ENCODE measurements at regions of chr20 and their contacts with region 1.

Region 1: DNA sequence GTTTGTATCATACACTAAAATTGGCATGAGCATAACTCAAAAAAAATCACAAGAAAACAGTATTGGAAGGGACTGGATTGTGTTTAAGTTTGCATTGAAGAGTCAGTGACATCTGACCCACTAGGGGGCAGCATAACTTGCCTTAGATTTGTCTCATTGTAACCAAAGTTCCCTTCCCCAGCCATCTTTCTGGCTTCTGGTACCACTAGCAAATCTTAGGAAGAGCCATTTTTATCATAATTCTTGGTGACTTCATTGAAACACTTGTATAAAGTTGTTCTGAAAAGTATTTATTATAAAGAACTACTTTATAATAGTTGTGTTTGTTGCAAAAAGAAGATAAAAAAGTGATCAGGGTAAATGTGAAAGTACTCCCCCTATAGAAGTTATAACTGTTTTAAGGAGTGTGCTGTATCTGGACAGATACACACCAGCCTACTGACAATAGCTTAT is 7.7 kb downstream of the CSTF1 start:
- DNase-seq: peak in 12 of 14 experiments; percentile 19 to 89 (median 58)
- ATAC-seq: peak; percentile 32
- H3K4me3 ChIP-seq: no peak overlapping the region
- H3K4me3 Mint-ChIP-seq: no peak overlapping the region
- H3K27ac ChIP-seq: no peak overlapping the region
- H3K27ac Mint-ChIP-seq: peak overlapping the region; percentile 74
- H3K4me1 ChIP-seq: no peaks in the 10 kb centered on the region
- H3K4me1 Mint-ChIP-seq: peaks cover 34% of the 10 kb centered on the region
- H3K27me3 ChIP-seq: no peaks in the 10 kb centered on the region
- H3K27me3 Mint-ChIP-seq: no peaks in the 10 kb centered on the region
- CTCF ChIP-seq: peak; percentile 92

Region 2: GRCh38 chr20:55974491-55975202 is 425.5 kb before region 1 on chr20:
- CTCF ChIA-PET with region 1: no interaction called
- POLR2A ChIA-PET with region 1: no interaction called
- intact Hi-C with region 1: no loop called
- DNase-seq: no peak
- ATAC-seq: no peak
- H3K4me3 ChIP-seq: no peak overlapping the region
- H3K4me3 Mint-ChIP-seq: no peak overlapping the region
- H3K27ac ChIP-seq: no peak overlapping the region
- H3K27ac Mint-ChIP-seq: no peak overlapping the region
- H3K4me1 ChIP-seq: no peaks in the 10 kb centered on the region
- H3K4me1 Mint-ChIP-seq: no peaks in the 10 kb centered on the region
- H3K27me3 ChIP-seq: no peaks in the 10 kb centered on the region
- H3K27me3 Mint-ChIP-seq: no peaks in the 10 kb centered on the region
- CTCF ChIP-seq: no peak

Region 3: DNA sequence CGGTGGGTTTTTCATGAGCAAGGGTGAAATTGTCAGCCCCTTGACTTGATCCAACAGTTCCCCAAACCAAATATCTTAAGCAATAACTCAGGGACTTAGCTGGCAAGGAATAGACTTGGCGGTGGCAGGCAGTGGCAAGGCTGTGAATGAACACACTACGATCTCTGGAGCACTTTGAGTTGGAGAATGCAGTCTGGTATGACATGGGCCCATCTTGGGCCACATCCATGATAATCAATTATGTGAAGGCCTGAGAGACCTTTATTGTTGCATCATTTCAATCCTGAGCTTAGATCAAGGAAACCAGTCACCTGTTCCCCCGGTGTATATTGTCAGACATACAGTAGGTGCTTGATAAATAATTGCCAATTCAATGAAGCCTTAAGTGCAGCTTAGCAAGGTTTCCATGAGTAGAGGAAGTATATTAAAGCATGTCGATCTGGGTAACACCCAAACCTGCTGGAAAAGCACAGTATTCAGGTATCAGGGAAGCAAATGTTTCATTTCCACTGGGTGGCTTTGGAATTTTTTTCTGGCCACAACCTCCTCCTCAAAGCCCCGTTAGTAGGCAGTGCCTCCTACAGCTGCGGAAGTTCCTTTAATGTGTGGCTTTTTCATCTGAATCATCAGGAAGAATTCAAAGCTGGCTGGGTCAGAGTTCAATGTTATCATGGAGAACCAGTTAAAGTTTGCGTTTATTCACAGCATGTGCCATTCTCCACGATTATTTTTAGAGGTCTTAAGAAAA is 22.1 kb after region 1 on chr20:
- CTCF ChIA-PET with region 1: interaction called, 4 read pairs
- POLR2A ChIA-PET with region 1: no interaction called
- intact Hi-C with region 1: loop called in 1 of 2 experiments (anchors 1 kb)
- DNase-seq: peak in 4 of 14 experiments; percentile 27 to 54 (median 45)
- ATAC-seq: no peak
- H3K4me3 ChIP-seq: no peak overlapping the region
- H3K4me3 Mint-ChIP-seq: peak overlapping the region; percentile 68
- H3K27ac ChIP-seq: peak overlapping the region in 1 of 2 donors; percentile 4
- H3K27ac Mint-ChIP-seq: peak overlapping the region; percentile 91
- H3K4me1 ChIP-seq: peaks cover 62% of the 10 kb centered on the region
- H3K4me1 Mint-ChIP-seq: peaks cover 64% of the 10 kb centered on the region
- H3K27me3 ChIP-seq: no peaks in the 10 kb centered on the region
- H3K27me3 Mint-ChIP-seq: no peaks in the 10 kb centered on the region
- CTCF ChIP-seq: no peak

Region 4: GRCh38 chr20:56468316-56469082 is 68.4 kb after region 1 on chr20 and contains the start of gene RTF2:
- CTCF ChIA-PET with region 1: interaction called, 3 read pairs
- POLR2A ChIA-PET with region 1: no interaction called
- intact Hi-C with region 1: loop called (anchors 2 kb)
- DNase-seq: peak; percentile 91 to 98 (median 94)
- ATAC-seq: peak; percentile 97
- H3K4me3 ChIP-seq: peak within 1 kb of the TSS; percentile 91
- H3K4me3 Mint-ChIP-seq: peak within 1 kb of the TSS; percentile 99
- H3K27ac ChIP-seq: peak within 1 kb of the TSS; percentile 90 to 93
- H3K27ac Mint-ChIP-seq: peak within 1 kb of the TSS; percentile 98
- H3K4me1 ChIP-seq: peaks cover 38% of the 10 kb centered on the region
- H3K4me1 Mint-ChIP-seq: peaks cover 43% of the 10 kb centered on the region
- H3K27me3 ChIP-seq: no peaks in the 10 kb centered on the region
- H3K27me3 Mint-ChIP-seq: no peaks in the 10 kb centered on the region
- CTCF ChIP-seq: no peak
- total RNA-seq, gene RTF2: 52.7 to 55.2 TPM

Region 5: GRCh38 chr20:56504373-56505005 is 104.4 kb after region 1 on chr20:
- CTCF ChIA-PET with region 1: no interaction called
- POLR2A ChIA-PET with region 1: interaction called, 3 read pairs
- intact Hi-C with region 1: loop called in 1 of 2 experiments (anchors 1 kb)
- DNase-seq: peak in 7 of 14 experiments; percentile 5 to 51 (median 9)
- ATAC-seq: peak; percentile 89
- H3K4me3 ChIP-seq: no peak overlapping the region
- H3K4me3 Mint-ChIP-seq: peak overlapping the region; percentile 8
- H3K27ac ChIP-seq: no peak overlapping the region
- H3K27ac Mint-ChIP-seq: peak overlapping the region; percentile 72
- H3K4me1 ChIP-seq: peaks cover 8% of the 10 kb centered on the region
- H3K4me1 Mint-ChIP-seq: peaks cover 32% of the 10 kb centered on the region
- H3K27me3 ChIP-seq: no peaks in the 10 kb centered on the region
- H3K27me3 Mint-ChIP-seq: no peaks in the 10 kb centered on the region
- CTCF ChIP-seq: peak; percentile 53

Region 6: GRCh38 chr20:56513161-56514150 is 113.3 kb after region 1 on chr20:
- CTCF ChIA-PET with region 1: no interaction called
- POLR2A ChIA-PET with region 1: interaction called, 3 read pairs
- intact Hi-C with region 1: loop called (anchors 1 to 2 kb)
- DNase-seq: no peak
- ATAC-seq: no peak
- H3K4me3 ChIP-seq: no peak overlapping the region
- H3K4me3 Mint-ChIP-seq: no peak overlapping the region
- H3K27ac ChIP-seq: no peak overlapping the region
- H3K27ac Mint-ChIP-seq: no peak overlapping the region
- H3K4me1 ChIP-seq: no peaks in the 10 kb centered on the region
- H3K4me1 Mint-ChIP-seq: no peaks in the 10 kb centered on the region
- H3K27me3 ChIP-seq: no peaks in the 10 kb centered on the region
- H3K27me3 Mint-ChIP-seq: no peaks in the 10 kb centered on the region
- CTCF ChIP-seq: no peak

Measured in CD4-positive, alpha-beta T cell (primary cell).